ENCODE measurements at regions of chr19 and their contacts with region 1.

Region 1: GRCh38 chr19:33406521-33407139 is 33.1 kb downstream of the CEBPG start:
- DNase-seq: peak; percentile 76 to 95
- ATAC-seq: peak; percentile 54 to 89
- H3K4me3 ChIP-seq: no peak overlapping the region
- H3K27ac ChIP-seq: no peak overlapping the region
- H3K4me1 ChIP-seq: peaks cover 8% of the 10 kb centered on the region; the same call in 1 of the 3 replicates
- CTCF ChIP-seq: peak; percentile 99
- EP300 ChIP-seq: no peak
- POLR2A ChIP-seq: no peak
- RAD21 ChIP-seq: peak; percentile 100

Region 2: GRCh38 chr19:32869966-32870573 is 536.6 kb before region 1 on chr19:
- CTCF ChIA-PET with region 1: no interaction called
- POLR2A ChIA-PET with region 1: no interaction called
- DNase-seq: no peak
- ATAC-seq: no peak; a peak in 1 of 6 replicates
- H3K4me3 ChIP-seq: no peak overlapping the region
- H3K27ac ChIP-seq: no peak overlapping the region
- H3K4me1 ChIP-seq: no peaks in the 10 kb centered on the region
- CTCF ChIP-seq: no peak
- EP300 ChIP-seq: no peak
- POLR2A ChIP-seq: no peak
- RAD21 ChIP-seq: no peak

Region 3: DNA sequence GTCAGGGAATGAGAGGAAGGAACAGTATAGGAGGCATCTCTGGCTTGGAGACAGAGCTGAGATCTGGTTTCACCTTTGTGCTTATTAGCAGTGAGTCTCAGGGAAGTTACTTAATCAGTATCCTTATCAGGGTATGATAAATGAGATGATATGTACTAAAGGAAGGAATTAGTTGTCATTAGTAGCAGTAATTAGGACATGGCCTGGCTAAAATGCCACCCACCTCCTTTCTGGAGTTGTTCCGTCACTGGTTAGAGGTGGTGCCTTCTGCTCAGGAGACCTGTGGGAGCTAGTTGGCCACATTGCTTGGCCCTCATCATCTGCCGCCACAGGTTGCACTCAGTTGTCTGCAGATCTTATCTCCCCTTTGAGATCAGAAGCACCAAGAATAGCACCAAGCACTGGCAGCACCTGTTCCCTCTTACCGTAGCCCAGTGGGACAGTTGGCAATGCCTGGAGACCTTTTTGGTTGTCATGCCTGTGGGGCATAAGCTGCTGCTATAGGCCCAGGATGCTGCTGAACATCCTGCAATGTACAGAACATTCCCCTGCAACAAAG is 321.0 kb before region 1 on chr19:
- CTCF ChIA-PET with region 1: no interaction called
- POLR2A ChIA-PET with region 1: no interaction called
- DNase-seq: no peak
- ATAC-seq: no peak
- H3K4me3 ChIP-seq: no peak overlapping the region
- H3K27ac ChIP-seq: no peak overlapping the region
- H3K4me1 ChIP-seq: peaks cover 16% of the 10 kb centered on the region
- CTCF ChIP-seq: no peak
- EP300 ChIP-seq: no peak
- POLR2A ChIP-seq: no peak
- RAD21 ChIP-seq: no peak

Region 4: DNA sequence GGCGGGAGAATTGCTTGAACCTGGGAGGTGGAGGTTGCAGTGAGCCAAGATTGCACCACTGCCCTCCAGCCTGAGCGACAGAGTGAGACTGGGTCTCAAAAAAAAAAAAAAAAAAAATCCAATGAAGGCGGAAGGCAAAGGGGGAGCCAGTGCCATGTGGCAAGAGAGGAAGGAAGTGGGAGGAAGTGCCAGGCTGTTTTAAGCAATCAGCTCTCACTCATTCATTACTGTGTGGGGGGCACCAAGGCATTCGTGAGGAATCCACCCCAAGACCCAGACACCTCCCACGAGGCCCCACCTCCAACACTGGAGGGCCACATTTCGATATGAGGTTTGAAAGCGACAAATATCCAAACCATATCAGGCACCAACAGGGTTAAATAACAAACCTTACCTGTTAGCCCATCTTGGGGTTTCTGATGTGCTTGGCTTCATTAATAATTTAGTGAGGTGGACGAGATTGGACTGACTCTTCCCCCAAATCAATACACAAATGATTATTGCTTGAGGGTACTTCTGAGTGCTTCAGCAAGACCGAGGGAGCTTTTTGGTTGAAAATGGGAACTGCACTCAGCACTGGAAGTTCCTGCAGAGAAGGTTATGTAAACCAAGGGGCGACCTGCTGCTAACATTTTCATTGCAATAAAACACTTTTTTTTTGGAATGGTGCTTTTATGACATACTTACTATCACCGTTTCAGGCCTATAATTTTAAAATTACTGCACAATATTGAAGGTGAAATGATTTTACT is 220.0 kb before region 1 on chr19:
- CTCF ChIA-PET with region 1: interaction called, 18 read pairs
- POLR2A ChIA-PET with region 1: no interaction called
- DNase-seq: no peak
- ATAC-seq: no peak
- H3K4me3 ChIP-seq: no peak overlapping the region
- H3K27ac ChIP-seq: no peak overlapping the region
- H3K4me1 ChIP-seq: no peaks in the 10 kb centered on the region
- CTCF ChIP-seq: no peak
- EP300 ChIP-seq: no peak
- POLR2A ChIP-seq: no peak
- RAD21 ChIP-seq: no peak

Region 5: DNA sequence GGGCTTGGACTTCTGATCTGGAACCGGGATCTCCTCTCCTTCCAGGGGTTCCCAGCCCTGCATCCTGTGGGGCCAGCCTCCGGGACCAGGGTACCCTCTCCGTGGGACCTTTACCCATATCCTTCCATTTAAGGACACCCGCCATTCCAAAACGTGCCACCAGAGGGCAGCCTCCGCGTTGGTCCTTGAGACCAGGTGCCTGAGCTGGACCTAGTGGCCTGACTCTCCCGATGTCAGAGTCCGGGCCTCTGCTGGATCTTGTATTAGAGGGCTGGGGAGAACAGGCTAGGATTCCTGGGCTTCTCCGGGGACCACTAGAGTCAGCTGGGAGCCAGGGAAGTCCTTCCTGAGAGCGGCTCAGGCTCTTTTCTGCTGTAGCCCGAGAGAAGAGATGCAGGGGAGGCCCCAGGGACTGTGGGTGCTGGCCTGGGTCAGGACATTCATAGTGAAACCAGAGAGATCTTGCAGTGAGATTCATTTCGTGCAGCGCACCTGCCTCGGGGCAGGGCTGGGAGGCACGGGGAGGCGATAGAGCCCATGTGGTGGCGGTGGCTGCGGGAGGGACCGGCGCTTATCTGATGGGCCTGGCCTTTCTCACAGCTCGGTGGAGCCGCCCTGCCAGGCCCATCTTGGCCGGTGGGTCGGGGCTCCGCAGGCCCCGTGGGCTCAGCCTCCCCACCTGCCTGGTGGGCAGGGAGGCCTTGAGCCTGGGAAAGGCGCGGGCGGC is 171.2 kb before region 1 on chr19:
- CTCF ChIA-PET with region 1: interaction called, 1,493 read pairs
- POLR2A ChIA-PET with region 1: no interaction called
- DNase-seq: peak; percentile 88 to 98
- ATAC-seq: peak; percentile 66 to 90
- H3K4me3 ChIP-seq: no peak overlapping the region
- H3K27ac ChIP-seq: 0 out of 6 replicates have a peak overlapping the region, but pooled peaks of 1 of the 2 experiments have one; percentile 13
- H3K4me1 ChIP-seq: no peaks in the 10 kb centered on the region; the same call in 2 of the 3 replicates
- CTCF ChIP-seq: peak; percentile 99
- EP300 ChIP-seq: no peak
- POLR2A ChIP-seq: no peak
- RAD21 ChIP-seq: peak; percentile 94 to 95

Region 6: DNA sequence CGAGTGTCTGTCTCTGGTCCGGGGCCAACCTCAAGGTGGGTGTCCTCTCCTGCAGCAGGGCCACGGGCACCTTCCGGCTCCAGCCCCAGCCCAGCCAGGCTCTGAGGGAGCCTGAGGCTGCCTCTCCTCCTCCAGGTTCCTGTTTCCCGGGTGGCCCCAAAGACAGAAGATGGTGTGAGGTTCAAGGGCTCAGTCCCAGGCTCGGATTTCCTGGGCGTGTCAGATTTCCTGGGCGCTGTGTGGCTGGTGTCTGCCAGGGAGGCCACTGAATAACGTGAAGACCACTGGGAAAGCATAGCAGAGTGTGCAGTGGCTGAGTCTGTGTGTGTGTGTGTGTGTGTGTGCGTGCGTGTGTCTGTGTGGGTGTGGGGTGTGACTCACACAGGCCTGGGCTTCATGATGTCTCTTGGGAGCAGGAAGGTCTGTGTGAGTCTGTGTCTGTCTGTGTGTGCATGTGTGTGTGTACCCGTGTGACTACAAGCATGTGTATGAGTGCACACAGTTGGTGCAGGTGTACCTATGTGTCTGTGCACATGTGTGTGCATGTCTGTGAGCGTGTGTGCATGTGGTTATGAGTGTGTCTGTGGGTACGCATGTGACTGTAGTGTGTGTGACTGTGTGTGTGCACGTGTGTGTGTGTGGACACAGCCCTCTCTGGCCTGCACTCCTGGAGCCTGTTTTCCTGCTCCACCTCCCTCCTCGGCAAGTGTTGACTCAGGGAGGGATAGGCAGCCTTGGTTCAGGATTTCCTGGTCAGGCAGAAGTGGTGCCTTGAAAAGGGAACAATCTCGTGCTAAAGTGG is 132.5 kb before region 1 on chr19:
- CTCF ChIA-PET with region 1: interaction called, 44 read pairs
- POLR2A ChIA-PET with region 1: no interaction called
- DNase-seq: peak in 1 of 2 experiments; percentile 80
- ATAC-seq: peak; percentile 42 to 66
- H3K4me3 ChIP-seq: no peak overlapping the region
- H3K27ac ChIP-seq: peak overlapping the region; percentile 43 to 76
- H3K4me1 ChIP-seq: peaks cover 29% of the 10 kb centered on the region
- CTCF ChIP-seq: no peak
- EP300 ChIP-seq: no peak
- POLR2A ChIP-seq: no peak
- RAD21 ChIP-seq: no peak

Region 7: GRCh38 chr19:33311326-33311682 is 95.3 kb before region 1 on chr19:
- CTCF ChIA-PET with region 1: interaction called, 34 read pairs
- POLR2A ChIA-PET with region 1: no interaction called
- DNase-seq: no peak
- ATAC-seq: peak; percentile 61 to 77; a peak in 5 of 6 replicates
- H3K4me3 ChIP-seq: no peak overlapping the region
- H3K27ac ChIP-seq: no peak overlapping the region
- H3K4me1 ChIP-seq: peaks cover 8% of the 10 kb centered on the region
- CTCF ChIP-seq: peak; percentile 48
- EP300 ChIP-seq: no peak
- POLR2A ChIP-seq: no peak
- RAD21 ChIP-seq: peak; percentile 56 to 63

Region 8: GRCh38 chr19:33438007-33438671 is 31.5 kb after region 1 on chr19:
- CTCF ChIA-PET with region 1: interaction called, 253 read pairs
- POLR2A ChIA-PET with region 1: no interaction called
- DNase-seq: peak in 1 of 2 experiments; percentile 48
- ATAC-seq: peak; percentile 27 to 72; a peak in 4 of 6 replicates
- H3K4me3 ChIP-seq: no peak overlapping the region
- H3K27ac ChIP-seq: no peak overlapping the region
- H3K4me1 ChIP-seq: no peaks in the 10 kb centered on the region
- CTCF ChIP-seq: no peak
- EP300 ChIP-seq: no peak
- POLR2A ChIP-seq: no peak
- RAD21 ChIP-seq: peak in 1 of 2 experiments; percentile 37; a peak in 3 of 5 replicates